B cell (primary cell): ENCODE measurements at regions of chr6 and their contacts with region 1.

Region 1: GRCh38 chr6:31769684-31770371 is 7.3 kb downstream of the VWA7 start:
- DNase-seq: peak; percentile 87
- ATAC-seq: peak; percentile 98
- H3K4me3 ChIP-seq: no peak overlapping the region
- H3K4me3 Mint-ChIP-seq: no peak overlapping the region
- H3K27ac ChIP-seq: no peak overlapping the region
- H3K27ac Mint-ChIP-seq: peak overlapping the region; percentile 32
- H3K4me1 ChIP-seq: peaks cover 0 to 9% of the 10 kb centered on the region in 2 donors
- H3K4me1 Mint-ChIP-seq: peaks cover 13% of the 10 kb centered on the region
- H3K27me3 ChIP-seq: no peaks in the 10 kb centered on the region
- H3K27me3 Mint-ChIP-seq: no peaks in the 10 kb centered on the region
- CTCF ChIP-seq: peak; percentile 74

Region 2: DNA sequence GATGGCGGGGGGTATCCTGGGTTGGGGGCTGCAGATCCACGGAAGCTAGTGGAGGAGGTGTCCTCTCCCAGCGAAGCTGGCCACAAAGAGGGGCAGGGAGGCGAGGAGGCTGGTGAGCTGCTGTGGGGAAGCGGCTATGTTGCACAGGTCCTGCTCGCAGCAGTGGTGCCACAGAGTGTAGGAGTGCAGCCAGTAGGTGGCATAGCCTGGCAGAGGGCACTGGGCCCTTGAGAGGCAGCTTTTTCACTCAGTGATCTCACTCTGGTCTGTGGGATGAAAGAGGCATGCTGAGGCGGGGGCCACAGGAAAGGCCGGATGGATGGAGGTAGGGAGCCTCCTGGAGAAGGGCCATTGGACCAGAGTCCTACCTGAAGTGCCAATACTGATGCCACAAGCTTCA is 57.5 kb before region 1 on chr6:
- CTCF ChIA-PET with region 1: interaction called, 17 read pairs
- POLR2A ChIA-PET with region 1: no interaction called
- intact Hi-C with region 1: no loop called
- DNase-seq: peak; percentile 54
- ATAC-seq: peak; percentile 71
- H3K4me3 ChIP-seq: no peak overlapping the region
- H3K4me3 Mint-ChIP-seq: no peak overlapping the region
- H3K27ac ChIP-seq: no peak overlapping the region
- H3K27ac Mint-ChIP-seq: no peak overlapping the region
- H3K4me1 ChIP-seq: peaks cover 10 to 16% of the 10 kb centered on the region in 2 donors
- H3K4me1 Mint-ChIP-seq: peaks cover 14% of the 10 kb centered on the region
- H3K27me3 ChIP-seq: peaks cover 0 to 6% (median 0%) of the 10 kb centered on the region in 4 experiments
- H3K27me3 Mint-ChIP-seq: peaks cover 3% of the 10 kb centered on the region
- CTCF ChIP-seq: peak; percentile 42

Region 3: DNA sequence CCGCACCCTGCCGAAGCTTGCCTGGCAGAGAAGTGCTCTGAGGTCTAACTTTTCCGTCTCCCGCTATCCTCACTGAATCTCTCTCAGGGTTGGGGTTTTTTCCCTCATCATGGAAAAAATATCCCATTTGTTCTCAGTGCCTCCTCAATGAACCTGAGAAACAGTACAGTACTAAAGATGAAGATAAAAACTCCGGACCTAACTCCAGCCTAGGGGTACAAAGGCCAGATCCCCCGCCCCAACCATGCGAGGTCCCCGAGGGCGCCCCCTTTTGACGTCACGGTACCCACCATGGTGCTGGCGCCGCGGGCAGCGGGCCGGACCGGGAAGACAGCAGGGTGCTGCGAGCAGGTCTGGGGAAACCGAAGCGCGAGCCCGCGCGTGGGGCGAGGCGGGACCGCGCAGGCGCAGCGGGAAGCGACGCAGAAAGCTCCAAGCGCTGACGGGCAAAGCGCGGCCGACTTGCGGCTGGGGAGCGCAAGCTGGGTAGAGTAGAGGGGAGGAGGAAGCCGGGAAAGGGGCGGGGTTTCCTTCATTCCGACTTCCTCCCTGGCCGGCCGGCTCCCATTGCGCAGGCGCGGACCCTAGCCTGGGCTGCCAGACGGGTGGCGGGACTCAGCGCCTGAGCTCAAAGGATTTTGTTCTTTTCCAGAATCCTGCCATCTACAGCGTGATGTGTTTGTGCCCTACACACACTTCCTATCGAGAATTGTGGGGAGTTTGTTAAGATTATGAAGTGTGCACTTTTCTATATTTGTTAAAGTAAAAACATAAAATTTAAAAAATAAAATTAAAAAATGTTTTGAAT is 36.8 kb after region 1 on chr6 and contains the start of gene LSM2:
- CTCF ChIA-PET with region 1: interaction called, 15 read pairs
- POLR2A ChIA-PET with region 1: no interaction called
- intact Hi-C with region 1: no loop called
- DNase-seq: peak; percentile 97
- ATAC-seq: peak; percentile 98
- H3K4me3 ChIP-seq: peak within 1 kb of the TSS; percentile 68 to 84 (median 84)
- H3K4me3 Mint-ChIP-seq: peak within 1 kb of the TSS; percentile 87
- H3K27ac ChIP-seq: peak within 1 kb of the TSS; percentile 77 to 93
- H3K27ac Mint-ChIP-seq: peak within 1 kb of the TSS; percentile 88
- H3K4me1 ChIP-seq: peaks cover 8 to 11% of the 10 kb centered on the region in 2 donors
- H3K4me1 Mint-ChIP-seq: peaks cover 16% of the 10 kb centered on the region
- H3K27me3 ChIP-seq: no peaks in the 10 kb centered on the region
- H3K27me3 Mint-ChIP-seq: no peaks in the 10 kb centered on the region
- CTCF ChIP-seq: peak; percentile 34
- total RNA-seq, gene LSM2: 45.3 and 52.4 TPM in 2 replicates

Region 4: DNA sequence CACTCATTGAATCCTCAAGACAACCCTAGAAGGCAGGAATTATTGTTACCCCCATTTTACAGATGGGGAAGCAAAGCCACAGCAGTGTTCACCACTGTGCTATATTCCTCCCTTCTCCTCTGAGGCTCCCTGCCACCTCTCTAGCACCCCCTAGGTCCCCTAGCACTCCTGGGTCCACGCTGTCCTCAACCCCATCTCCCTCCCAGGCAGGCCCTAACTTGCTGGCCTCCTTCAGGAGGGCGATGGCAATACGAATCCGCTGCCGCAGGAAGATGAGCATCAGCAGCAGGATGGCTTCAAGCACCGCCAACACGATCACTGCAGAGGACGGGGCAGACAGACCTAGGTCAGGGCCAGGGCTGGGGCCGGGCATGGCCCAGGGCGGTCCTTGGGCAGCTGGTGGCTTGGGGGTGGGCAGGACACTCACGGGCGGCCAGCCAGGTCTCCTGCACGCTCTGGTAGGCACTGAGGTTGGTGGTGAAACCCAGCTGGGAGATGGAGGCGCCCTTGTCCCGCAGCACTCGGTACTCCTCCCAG is 100.6 kb after region 1 on chr6:
- CTCF ChIA-PET with region 1: no interaction called
- POLR2A ChIA-PET with region 1: no interaction called
- intact Hi-C with region 1: no loop called
- DNase-seq: no peak
- ATAC-seq: no peak
- H3K4me3 ChIP-seq: no peak overlapping the region
- H3K4me3 Mint-ChIP-seq: no peak overlapping the region
- H3K27ac ChIP-seq: no peak overlapping the region
- H3K27ac Mint-ChIP-seq: no peak overlapping the region
- H3K4me1 ChIP-seq: no peaks in the 10 kb centered on the region
- H3K4me1 Mint-ChIP-seq: no peaks in the 10 kb centered on the region
- H3K27me3 ChIP-seq: no peaks in the 10 kb centered on the region
- H3K27me3 Mint-ChIP-seq: peaks cover 4% of the 10 kb centered on the region
- CTCF ChIP-seq: no peak